ENCODE measurements at regions of chr16 and their contacts with region 1.

Region 1: GRCh38 chr16:15765880-15766279 is 90.9 kb downstream of the MYH11 start:
- DNase-seq: peak; percentile 15
- H3K4me3 Mint-ChIP-seq: no peak overlapping the region
- H3K27ac Mint-ChIP-seq: no peak overlapping the region
- H3K4me1 Mint-ChIP-seq: peaks cover 3% of the 10 kb centered on the region
- H3K27me3 Mint-ChIP-seq: peaks cover 5% of the 10 kb centered on the region

Region 2: DNA sequence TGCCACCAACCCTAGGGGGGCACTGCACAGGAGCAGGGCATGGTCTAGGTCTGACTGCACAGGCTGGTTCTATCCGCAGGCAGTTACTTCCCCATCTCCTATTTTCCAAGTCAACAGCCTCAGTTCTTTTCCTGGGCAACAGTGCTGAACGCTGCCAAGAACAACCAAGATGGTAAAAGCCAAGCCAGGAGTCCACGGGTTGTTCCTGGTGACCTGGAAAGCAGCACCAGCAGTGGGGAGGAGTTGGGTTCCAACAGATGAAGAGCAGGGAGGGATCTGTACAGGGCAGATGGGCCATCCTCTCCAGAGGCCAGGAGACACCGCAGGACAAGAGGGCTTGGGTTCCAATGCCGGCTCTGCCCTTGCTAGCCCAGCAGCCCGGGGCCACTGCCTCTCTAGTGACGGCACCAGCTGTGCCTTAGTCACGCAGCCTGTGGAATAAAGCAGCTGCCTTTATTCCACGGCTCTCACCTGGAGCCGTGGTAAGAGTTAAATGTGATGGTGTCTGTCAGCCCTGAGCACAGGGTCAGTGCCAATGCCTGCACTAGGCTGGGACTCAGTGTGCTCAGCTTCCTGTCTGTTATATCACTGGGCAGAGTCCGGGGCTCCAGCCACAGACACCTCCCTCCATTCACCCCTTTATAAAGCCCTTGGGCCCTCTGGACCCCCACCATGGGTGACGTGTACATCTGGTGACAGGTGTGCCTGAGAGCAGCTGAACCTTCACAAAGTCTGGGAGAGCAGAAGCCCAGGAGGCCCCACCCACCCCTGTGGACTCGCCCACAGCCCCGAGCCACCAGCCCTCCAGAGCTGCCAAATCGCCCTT is 167.8 kb before region 1 on chr16:
- intact Hi-C with region 1: no loop called
- DNase-seq: no peak
- H3K4me3 Mint-ChIP-seq: no peak overlapping the region
- H3K27ac Mint-ChIP-seq: peak overlapping the region; percentile 93
- H3K4me1 Mint-ChIP-seq: peaks cover 10% of the 10 kb centered on the region
- H3K27me3 Mint-ChIP-seq: no peaks in the 10 kb centered on the region

Region 3: GRCh38 chr16:15732416-15732815 is 33.5 kb before region 1 on chr16:
- intact Hi-C with region 1: no loop called
- DNase-seq: no peak
- H3K4me3 Mint-ChIP-seq: no peak overlapping the region
- H3K27ac Mint-ChIP-seq: no peak overlapping the region
- H3K4me1 Mint-ChIP-seq: no peaks in the 10 kb centered on the region
- H3K27me3 Mint-ChIP-seq: no peaks in the 10 kb centered on the region

Region 4: GRCh38 chr16:15820837-15821236 is 55.0 kb after region 1 on chr16:
- intact Hi-C with region 1: loop called (anchors 1 kb)
- DNase-seq: no peak
- H3K4me3 Mint-ChIP-seq: no peak overlapping the region
- H3K27ac Mint-ChIP-seq: no peak overlapping the region
- H3K4me1 Mint-ChIP-seq: no peaks in the 10 kb centered on the region
- H3K27me3 Mint-ChIP-seq: peaks cover 6% of the 10 kb centered on the region

Region 5: DNA sequence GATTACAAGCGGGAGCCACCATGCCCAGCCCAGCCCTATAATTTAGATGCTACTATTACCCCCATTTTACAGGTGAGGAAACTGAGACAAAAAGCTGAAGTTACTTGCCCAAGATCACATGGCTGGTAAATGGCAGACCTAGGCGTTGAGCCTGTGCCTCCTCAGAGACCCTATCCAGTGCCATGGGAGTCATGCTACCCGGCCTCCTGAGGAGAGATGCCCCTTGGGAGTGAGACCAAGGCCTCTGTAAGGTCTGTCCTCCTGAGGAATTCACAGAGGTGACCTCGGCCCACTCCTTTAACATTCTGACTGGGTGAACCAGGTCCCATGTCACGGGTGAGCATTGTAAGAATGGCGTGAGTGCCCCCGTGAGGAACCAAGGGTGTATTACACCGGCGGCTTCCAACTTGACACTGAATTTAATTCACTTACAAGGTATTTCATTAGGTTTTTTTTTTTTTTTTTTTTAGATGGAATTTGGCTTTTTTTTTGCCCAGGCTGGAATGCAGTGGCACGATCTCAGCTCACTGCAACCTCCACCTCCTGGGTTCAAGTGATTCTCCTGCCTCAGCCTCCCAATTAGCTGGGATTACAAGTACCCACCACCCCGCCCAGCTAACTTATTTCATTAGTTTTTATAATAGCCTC is 361.7 kb after region 1 on chr16:
- intact Hi-C with region 1: loop called (anchors 5 kb)
- DNase-seq: peak; percentile 64
- H3K4me3 Mint-ChIP-seq: no peak overlapping the region
- H3K27ac Mint-ChIP-seq: no peak overlapping the region
- H3K4me1 Mint-ChIP-seq: peaks cover 3% of the 10 kb centered on the region
- H3K27me3 Mint-ChIP-seq: no peaks in the 10 kb centered on the region

Region 6: GRCh38 chr16:16191493-16192167 is 425.8 kb after region 1 on chr16:
- intact Hi-C with region 1: loop called (anchors 10 kb)
- DNase-seq: no peak
- H3K4me3 Mint-ChIP-seq: no peak overlapping the region
- H3K27ac Mint-ChIP-seq: no peak overlapping the region
- H3K4me1 Mint-ChIP-seq: no peaks in the 10 kb centered on the region
- H3K27me3 Mint-ChIP-seq: no peaks in the 10 kb centered on the region